ENCODE measurements at regions of chr12 and their contacts with region 1.

Region 1: DNA sequence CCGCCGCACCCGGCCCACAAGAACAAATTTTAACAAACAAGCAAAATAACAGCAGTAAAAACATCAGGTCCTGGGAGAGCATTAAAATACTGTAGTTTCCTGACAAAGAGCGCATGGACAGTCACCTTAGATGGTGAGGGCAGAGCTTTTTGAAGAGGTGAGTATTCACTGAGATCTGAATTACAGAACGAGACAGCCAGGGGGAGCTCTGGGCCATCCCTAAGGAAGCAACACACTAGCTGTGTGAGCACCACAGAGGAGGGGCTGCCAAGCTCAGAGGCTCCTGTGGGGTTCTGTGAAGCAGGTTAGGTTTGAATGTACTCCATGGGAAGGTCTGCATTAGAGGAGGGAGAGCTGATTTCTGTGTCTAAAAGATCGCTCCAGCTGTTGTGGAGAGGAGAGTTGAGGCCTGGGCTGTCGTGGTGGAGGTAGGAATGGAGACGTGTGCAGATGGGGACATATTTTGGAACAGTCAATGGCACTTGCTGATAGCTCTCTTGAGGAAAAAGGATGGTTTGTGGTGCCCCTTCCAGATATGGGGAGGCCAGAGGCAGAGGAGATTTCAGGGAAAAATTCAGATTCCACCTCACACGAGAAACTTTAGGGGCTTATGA is 72.9 kb downstream of the TRAFD1 start:
- DNase-seq: peak; percentile 59
- H3K4me3 ChIP-seq: no peak overlapping the region
- H3K27ac ChIP-seq: no peak overlapping the region
- H3K4me1 ChIP-seq: no peaks in the 10 kb centered on the region
- H3K27me3 ChIP-seq: no peaks in the 10 kb centered on the region
- CTCF ChIP-seq: peak; percentile 47 to 72
- POLR2A ChIP-seq: no peak

Region 2: DNA sequence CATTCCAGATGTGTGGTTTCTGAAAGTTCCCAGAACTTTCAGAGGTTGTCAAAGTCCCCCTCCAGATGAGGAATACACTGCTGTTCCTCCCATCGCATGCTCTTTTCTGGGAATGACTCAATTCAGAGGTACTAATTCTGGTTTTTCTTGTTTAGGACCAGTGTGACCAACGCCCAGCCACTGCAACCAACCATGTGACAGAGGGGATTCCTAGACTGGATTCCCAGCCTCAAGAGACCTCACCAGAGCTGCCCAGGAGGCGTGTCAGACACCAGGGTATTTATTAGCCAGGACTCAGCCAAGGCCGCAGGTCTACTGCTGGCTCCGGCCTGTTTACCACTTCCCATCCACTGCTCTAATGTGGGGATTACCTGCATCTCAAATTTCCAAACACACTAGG is 48.6 kb before region 1 on chr12:
- CTCF ChIA-PET with region 1: no interaction called
- POLR2A ChIA-PET with region 1: no interaction called
- dilution Hi-C with region 1: no loop called
- intact Hi-C with region 1: no loop called
- DNase-seq: no peak
- H3K4me3 ChIP-seq: no peak overlapping the region
- H3K27ac ChIP-seq: no peak overlapping the region
- H3K4me1 ChIP-seq: peaks cover 5% of the 10 kb centered on the region
- H3K27me3 ChIP-seq: no peaks in the 10 kb centered on the region
- CTCF ChIP-seq: no peak
- POLR2A ChIP-seq: no peak

Region 3: GRCh38 chr12:112409064-112409905 is 211.1 kb after region 1 on chr12 and contains the start of gene RPL6:
- CTCF ChIA-PET with region 1: interaction called, 29 read pairs
- POLR2A ChIA-PET with region 1: no interaction called
- dilution Hi-C with region 1: no loop called
- intact Hi-C with region 1: no loop called
- DNase-seq: peak; percentile 93
- H3K4me3 ChIP-seq: peak within 1 kb of the TSS; percentile 63 to 91 (median 89)
- H3K27ac ChIP-seq: peak within 1 kb of the TSS; percentile 77
- H3K4me1 ChIP-seq: peaks cover 20% of the 10 kb centered on the region
- H3K27me3 ChIP-seq: peaks cover 0 to 4% of the 10 kb centered on the region in 2 experiments
- CTCF ChIP-seq: no peak
- POLR2A ChIP-seq: peak; percentile 99
- total RNA-seq, gene RPL6: 1,359 and 1,385 TPM in 2 replicates

Measured in endothelial cell of umbilical vein (primary cell).